Activated CD4-positive, alpha-beta memory T cell treated with anti-CD3 and anti-CD28 coated beads for 36 hours (primary cell): ENCODE measurements at regions of chr13 and their contacts with region 1.

Region 1: GRCh38 chr13:42333613-42334328 is 61.8 kb downstream of the AKAP11 start:
- DNase-seq: no peak
- H3K4me3 Mint-ChIP-seq: no peak overlapping the region
- H3K27ac Mint-ChIP-seq: peak overlapping the region; percentile 64
- H3K4me1 Mint-ChIP-seq: peaks cover 32% of the 10 kb centered on the region
- H3K27me3 Mint-ChIP-seq: no peaks in the 10 kb centered on the region

Region 2: GRCh38 chr13:42367831-42368230 is 34.1 kb after region 1 on chr13:
- CTCF ChIA-PET with region 1: interaction called, 14 read pairs
- POLR2A ChIA-PET with region 1: no interaction called
- intact Hi-C with region 1: no loop called
- DNase-seq: no peak
- H3K4me3 Mint-ChIP-seq: no peak overlapping the region
- H3K27ac Mint-ChIP-seq: no peak overlapping the region
- H3K4me1 Mint-ChIP-seq: peaks cover 47% of the 10 kb centered on the region
- H3K27me3 Mint-ChIP-seq: no peaks in the 10 kb centered on the region

Region 3: DNA sequence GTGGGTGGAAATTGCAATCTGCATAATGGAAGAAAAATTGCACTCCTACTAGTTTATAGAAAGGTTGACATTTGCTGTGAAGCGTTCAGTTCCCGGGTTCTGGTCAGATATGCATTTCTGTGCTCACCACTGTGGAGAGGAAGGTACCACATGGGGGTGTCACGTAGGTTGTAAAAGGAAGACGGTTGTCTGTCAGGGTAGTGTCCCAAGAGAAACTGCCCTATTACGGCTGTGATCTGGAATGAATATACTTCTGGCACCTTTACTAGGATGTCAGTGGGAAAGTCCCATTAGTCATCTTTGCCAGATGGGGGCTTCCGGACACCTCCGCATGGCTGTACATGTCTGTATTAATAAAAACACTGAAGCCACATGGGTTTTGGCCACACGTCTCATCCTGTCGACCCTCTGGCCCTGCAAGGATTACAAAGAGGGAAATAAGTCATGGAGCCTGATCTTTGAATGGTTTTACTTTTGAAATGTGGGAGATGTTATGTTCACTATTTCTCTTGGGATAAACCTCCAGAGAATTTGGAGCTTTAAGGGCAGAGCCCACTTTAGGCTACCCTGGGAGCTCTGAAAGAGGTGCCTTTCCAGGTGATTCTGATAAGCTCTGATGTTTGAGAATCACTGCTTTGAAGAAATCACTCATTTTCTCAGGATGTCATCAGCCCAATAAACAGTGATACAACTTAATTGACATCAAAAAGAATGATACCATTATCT is 72.1 kb after region 1 on chr13:
- CTCF ChIA-PET with region 1: interaction called, 3 read pairs
- POLR2A ChIA-PET with region 1: interaction called, 4 read pairs
- intact Hi-C with region 1: loop called (anchors 2 kb)
- DNase-seq: peak; percentile 89
- H3K4me3 Mint-ChIP-seq: peak overlapping the region; percentile 59
- H3K27ac Mint-ChIP-seq: peak overlapping the region; percentile 93
- H3K4me1 Mint-ChIP-seq: peaks cover 75% of the 10 kb centered on the region
- H3K27me3 Mint-ChIP-seq: no peaks in the 10 kb centered on the region

Region 4: GRCh38 chr13:42478531-42479156 is 144.9 kb after region 1 on chr13:
- CTCF ChIA-PET with region 1: interaction called, 20 read pairs
- POLR2A ChIA-PET with region 1: no interaction called
- intact Hi-C with region 1: loop called (anchors 1 kb)
- DNase-seq: no peak
- H3K4me3 Mint-ChIP-seq: no peak overlapping the region
- H3K27ac Mint-ChIP-seq: no peak overlapping the region
- H3K4me1 Mint-ChIP-seq: peaks cover 23% of the 10 kb centered on the region
- H3K27me3 Mint-ChIP-seq: no peaks in the 10 kb centered on the region

Region 5: DNA sequence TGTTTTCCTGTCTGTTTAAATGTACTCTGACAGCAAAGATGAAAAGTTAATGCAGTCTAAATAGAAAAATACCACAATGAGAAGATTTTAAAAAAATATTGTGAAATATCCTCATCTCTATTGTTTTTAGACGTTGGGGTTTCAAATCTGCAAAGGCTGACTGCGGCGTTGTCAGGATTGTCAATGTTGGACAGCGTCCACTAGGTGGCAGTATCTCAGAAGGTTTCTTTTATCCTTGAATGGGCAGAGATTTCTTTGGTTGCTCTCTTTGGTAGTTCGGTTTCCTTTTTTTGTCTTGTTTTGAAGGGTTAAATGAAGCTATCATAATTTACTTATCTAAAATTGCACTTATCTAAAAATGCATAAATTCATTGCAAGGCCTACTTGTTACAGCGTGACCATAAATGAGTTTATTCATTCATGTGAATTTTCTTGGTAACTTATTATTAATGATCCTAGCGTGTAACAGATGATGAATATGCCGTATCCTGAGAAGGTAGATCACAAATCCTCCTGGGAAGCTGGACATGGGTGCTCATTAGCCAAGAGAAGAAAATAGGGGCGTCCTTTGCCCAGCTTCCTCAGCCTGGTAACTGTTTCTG is 261.3 kb after region 1 on chr13:
- CTCF ChIA-PET with region 1: interaction called, 11 read pairs
- POLR2A ChIA-PET with region 1: no interaction called
- intact Hi-C with region 1: loop called (anchors 5 kb)
- DNase-seq: peak; percentile 67
- H3K4me3 Mint-ChIP-seq: no peak overlapping the region
- H3K27ac Mint-ChIP-seq: no peak overlapping the region
- H3K4me1 Mint-ChIP-seq: peaks cover under 1% of the 10 kb centered on the region
- H3K27me3 Mint-ChIP-seq: no peaks in the 10 kb centered on the region

Region 6: DNA sequence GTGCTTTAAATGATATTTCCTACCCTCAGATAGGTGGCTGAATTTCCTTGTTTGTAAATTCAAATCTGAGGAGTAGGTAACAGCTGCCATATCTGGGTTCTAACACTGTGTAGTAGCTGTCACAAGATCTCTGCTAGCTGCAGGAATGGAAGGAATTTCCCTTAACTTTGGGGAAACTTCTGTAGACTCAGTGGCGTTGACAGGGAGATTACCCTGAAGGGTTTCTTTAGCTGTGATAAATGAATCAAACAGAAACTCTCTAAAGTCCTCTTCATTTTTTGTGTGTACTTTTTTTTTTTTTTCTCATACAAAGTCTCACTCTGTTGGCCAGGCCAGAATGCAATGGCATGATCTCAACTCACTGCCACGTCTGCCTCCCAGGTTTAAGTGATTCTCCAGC is 663.6 kb after region 1 on chr13:
- CTCF ChIA-PET with region 1: no interaction called
- POLR2A ChIA-PET with region 1: no interaction called
- intact Hi-C with region 1: no loop called
- DNase-seq: no peak
- H3K4me3 Mint-ChIP-seq: no peak overlapping the region
- H3K27ac Mint-ChIP-seq: peak overlapping the region; percentile 40
- H3K4me1 Mint-ChIP-seq: peaks cover 31% of the 10 kb centered on the region
- H3K27me3 Mint-ChIP-seq: no peaks in the 10 kb centered on the region